CD4-positive, alpha-beta memory T cell (primary cell): ENCODE measurements at regions of chr4 and their contacts with region 1.

Region 1: GRCh38 chr4:145097821-145098674 is at the starts of genes ABCE1 and ANAPC10:
- DNase-seq: peak; percentile 92 to 98 (median 95)
- H3K4me3 ChIP-seq: peak within 1 kb of the TSS; percentile 82 to 96
- H3K4me3 Mint-ChIP-seq: peak within 1 kb of the TSS; percentile 91 to 98 (median 97)
- H3K27ac ChIP-seq: peak within 1 kb of the TSS; percentile 83
- H3K27ac Mint-ChIP-seq: peak within 1 kb of the TSS; percentile 97 to 99 (median 99)
- H3K4me1 ChIP-seq: peaks cover 52% of the 10 kb centered on the region
- H3K4me1 Mint-ChIP-seq: peaks cover 20 to 47% (median 35%) of the 10 kb centered on the region in 4 donors
- H3K27me3 ChIP-seq: no peaks in the 10 kb centered on the region
- H3K27me3 Mint-ChIP-seq: no peaks in the 10 kb centered on the region
- total RNA-seq, gene ABCE1: 67.9 to 71.4 TPM
- total RNA-seq, gene ANAPC10: 14.8 to 15.7 TPM

Region 2: DNA sequence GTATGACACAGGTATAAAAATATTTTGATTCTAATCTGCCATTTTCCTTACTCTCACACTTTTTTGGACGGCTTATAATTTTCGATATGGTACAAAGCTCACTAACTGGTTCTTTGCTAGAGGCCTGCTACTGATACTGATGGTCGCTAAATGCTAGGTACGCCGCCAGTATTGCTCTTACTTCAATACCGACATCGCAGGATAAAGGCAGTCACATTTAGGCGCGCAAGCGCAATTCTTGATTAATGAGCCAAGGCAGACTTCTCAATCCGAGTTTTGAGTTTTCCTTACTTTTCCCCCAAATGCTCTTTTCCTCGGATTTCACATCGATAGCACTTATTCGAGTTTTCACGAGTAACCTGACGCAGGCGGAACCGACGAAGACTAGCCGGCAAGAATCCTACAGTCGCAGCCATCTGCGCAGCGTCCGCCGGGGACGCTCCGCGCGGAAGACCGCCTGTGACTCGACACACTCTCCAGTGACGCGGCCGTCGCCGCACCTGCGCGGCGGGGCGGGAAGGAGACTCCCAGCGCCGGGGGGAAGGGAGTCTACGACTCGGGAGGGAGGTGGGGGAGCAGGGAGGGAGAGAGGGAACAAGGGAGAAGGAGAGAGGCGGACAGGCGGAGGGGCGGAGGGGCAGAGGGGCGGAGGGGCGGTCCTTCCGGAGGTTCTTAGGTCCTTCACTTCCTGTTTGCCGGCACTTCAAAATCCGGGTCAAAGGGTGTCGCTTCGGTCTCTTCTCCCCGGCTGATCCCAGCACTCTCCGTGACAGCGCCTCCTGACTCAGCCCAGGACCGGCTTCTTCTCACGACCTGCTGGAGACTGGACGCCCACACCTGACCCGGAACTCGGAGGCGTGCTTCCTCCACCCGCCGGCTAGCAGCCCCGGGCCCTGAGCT is 1913.6 kb before region 1 on chr4 and contains the start of gene USP38:
- CTCF ChIA-PET with region 1: no interaction called
- POLR2A ChIA-PET with region 1: no interaction called
- intact Hi-C with region 1: loop called (anchors 2 kb)
- DNase-seq: peak; percentile 83 to 94 (median 86)
- H3K4me3 ChIP-seq: peak within 1 kb of the TSS; percentile 59 to 79
- H3K4me3 Mint-ChIP-seq: peak within 1 kb of the TSS; percentile 87 to 96 (median 94)
- H3K27ac ChIP-seq: peak within 1 kb of the TSS; percentile 93
- H3K27ac Mint-ChIP-seq: peak within 1 kb of the TSS; percentile 95 to 99 (median 98)
- H3K4me1 ChIP-seq: peaks cover 49% of the 10 kb centered on the region
- H3K4me1 Mint-ChIP-seq: peaks cover 35 to 63% (median 49%) of the 10 kb centered on the region in 4 donors
- H3K27me3 ChIP-seq: no peaks in the 10 kb centered on the region
- H3K27me3 Mint-ChIP-seq: no peaks in the 10 kb centered on the region
- total RNA-seq, gene USP38: 25.8 to 26.4 TPM

Region 3: DNA sequence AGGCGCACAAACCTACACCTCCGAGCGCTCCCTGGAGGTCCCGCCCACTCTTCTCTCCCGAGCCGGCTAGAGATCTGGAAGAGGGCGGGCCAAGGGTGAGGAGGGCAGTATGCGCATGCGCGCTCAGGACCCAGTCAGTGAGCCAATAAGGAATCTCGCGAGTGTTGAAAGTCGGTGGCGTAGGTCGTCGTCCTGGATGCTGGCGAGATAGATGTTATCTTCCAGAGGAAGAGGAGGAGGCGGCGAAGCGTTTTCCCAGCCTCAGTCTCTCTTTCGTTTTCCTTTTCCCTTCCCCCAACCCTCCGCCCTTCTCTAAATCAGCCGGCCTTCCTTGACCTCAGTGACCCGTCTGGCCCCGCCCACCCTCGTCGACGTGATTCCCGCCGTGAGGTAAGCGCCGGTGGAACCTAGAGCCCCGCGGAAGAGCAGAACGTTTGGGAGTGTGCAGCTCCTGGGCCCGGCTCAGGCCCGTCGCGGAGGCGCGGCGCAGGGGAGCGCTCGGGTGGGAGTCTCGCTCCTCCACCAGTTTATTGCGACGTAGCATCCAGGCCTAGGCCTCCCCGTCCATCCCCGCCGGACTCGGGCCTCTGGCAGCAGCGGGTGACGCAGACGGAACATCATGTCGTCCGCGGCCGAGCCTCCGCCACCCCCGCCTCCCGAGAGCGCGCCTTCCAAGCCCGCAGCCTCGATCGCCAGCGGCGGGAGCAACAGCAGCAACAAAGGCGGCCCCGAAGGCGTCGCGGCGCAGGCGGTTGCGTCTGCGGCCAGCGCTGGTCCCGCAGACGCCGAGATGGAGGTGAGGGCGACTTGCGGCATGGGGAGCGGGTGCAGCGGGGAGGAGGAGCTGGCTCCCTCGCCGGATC is 1584.5 kb before region 1 on chr4 and contains the start of gene SMARCA5:
- CTCF ChIA-PET with region 1: no interaction called
- POLR2A ChIA-PET with region 1: interaction called, 3 read pairs
- intact Hi-C with region 1: loop called (anchors 1 kb)
- DNase-seq: peak; percentile 97 to 99 (median 98)
- H3K4me3 ChIP-seq: peak within 1 kb of the TSS; percentile 75 to 80
- H3K4me3 Mint-ChIP-seq: peak within 1 kb of the TSS; percentile 97 to 100 (median 99)
- H3K27ac ChIP-seq: peak within 1 kb of the TSS; percentile 96
- H3K27ac Mint-ChIP-seq: peak within 1 kb of the TSS; percentile 100
- H3K4me1 ChIP-seq: peaks cover 45% of the 10 kb centered on the region
- H3K4me1 Mint-ChIP-seq: peaks cover 24 to 55% (median 31%) of the 10 kb centered on the region in 4 donors
- H3K27me3 ChIP-seq: peaks cover 4% of the 10 kb centered on the region
- H3K27me3 Mint-ChIP-seq: peaks cover 2 to 5% of the 10 kb centered on the region in 2 donors
- total RNA-seq, gene SMARCA5: 59.3 to 61.2 TPM

Region 4: GRCh38 chr4:145125396-145125795 is 27.3 kb after region 1 on chr4:
- CTCF ChIA-PET with region 1: interaction called, 5 read pairs
- POLR2A ChIA-PET with region 1: interaction called, 15 read pairs
- intact Hi-C with region 1: no loop called
- DNase-seq: no peak
- H3K4me3 ChIP-seq: no peak overlapping the region
- H3K4me3 Mint-ChIP-seq: peak overlapping the region in 3 of 8 donors; percentile 35 to 82 (median 68)
- H3K27ac ChIP-seq: peak overlapping the region; percentile 53
- H3K27ac Mint-ChIP-seq: peak overlapping the region; percentile 81 to 94 (median 89)
- H3K4me1 ChIP-seq: peaks cover 15% of the 10 kb centered on the region
- H3K4me1 Mint-ChIP-seq: peaks cover 13 to 19% (median 15%) of the 10 kb centered on the region in 4 donors
- H3K27me3 ChIP-seq: no peaks in the 10 kb centered on the region
- H3K27me3 Mint-ChIP-seq: no peaks in the 10 kb centered on the region

Region 5: DNA sequence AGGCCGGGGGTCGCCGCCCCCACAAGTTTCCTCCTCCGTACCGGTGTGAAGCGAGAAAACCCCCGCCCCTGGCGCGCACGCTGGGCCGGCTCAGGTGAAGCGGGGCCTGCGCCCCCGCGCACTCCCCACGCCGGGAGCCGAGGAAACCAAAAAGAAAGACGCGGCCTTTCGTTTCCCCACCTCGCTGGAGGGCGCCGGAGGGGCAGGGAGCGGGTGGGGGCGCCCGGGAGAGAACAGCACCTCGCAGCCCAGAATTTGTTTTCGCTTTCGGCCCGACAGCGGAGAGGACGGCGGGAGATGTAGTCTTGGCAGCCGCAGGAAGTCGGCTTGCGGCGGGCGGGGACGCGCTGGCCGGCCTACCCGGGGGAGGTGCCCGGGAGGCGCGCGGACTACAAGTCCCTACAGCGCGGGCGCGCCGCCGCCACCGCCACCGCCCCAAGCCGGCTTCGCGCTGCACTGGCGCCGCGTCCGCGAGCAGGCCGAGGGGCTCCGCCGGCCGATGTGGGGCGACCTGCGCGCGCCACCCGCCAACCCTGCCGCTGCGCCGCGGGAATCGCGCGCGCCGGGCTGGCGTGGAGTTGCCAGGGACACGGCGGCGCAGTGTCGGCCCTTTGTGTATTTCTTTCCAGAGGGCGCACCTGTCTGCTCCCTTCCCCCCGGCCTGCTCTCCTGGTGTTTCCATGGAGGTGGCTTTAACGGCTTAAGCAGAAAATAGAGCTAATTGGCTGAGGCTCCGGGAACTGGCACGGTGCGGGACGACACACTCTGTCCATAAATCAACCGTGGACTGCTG is 82.4 kb after region 1 on chr4 and contains the start of gene OTUD4:
- CTCF ChIA-PET with region 1: interaction called, 10 read pairs
- POLR2A ChIA-PET with region 1: interaction called, 51 read pairs
- intact Hi-C with region 1: loop called (anchors 1 kb)
- DNase-seq: peak; percentile 95 to 97 (median 96)
- H3K4me3 ChIP-seq: peak within 1 kb of the TSS; percentile 84 to 96
- H3K4me3 Mint-ChIP-seq: peak within 1 kb of the TSS; percentile 89 to 98 (median 95)
- H3K27ac ChIP-seq: peak within 1 kb of the TSS; percentile 94
- H3K27ac Mint-ChIP-seq: peak within 1 kb of the TSS; percentile 96 to 99 (median 98)
- H3K4me1 ChIP-seq: peaks cover 40% of the 10 kb centered on the region
- H3K4me1 Mint-ChIP-seq: peaks cover 15 to 40% (median 28%) of the 10 kb centered on the region in 4 donors
- H3K27me3 ChIP-seq: no peaks in the 10 kb centered on the region
- H3K27me3 Mint-ChIP-seq: no peaks in the 10 kb centered on the region
- total RNA-seq, gene OTUD4: 60.1 to 61.3 TPM

Region 6: DNA sequence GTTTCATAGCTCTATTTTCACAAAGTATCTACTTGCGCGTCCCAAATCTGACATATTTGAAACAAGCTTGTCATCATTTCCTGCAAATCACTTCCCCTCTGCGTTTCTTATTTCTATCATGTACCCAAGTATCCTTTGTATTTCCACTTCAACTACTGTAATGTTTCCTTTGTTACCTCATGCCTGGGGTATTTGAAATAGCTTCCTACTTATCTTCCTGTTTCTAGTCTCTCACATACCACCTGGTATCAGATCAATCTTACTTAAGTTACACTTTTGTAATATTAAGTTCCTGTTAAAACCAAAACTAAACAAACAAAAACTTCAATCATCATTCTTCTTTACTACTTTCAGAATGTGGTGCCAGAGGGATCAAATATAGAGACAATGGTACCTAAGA is 290.0 kb after region 1 on chr4:
- CTCF ChIA-PET with region 1: no interaction called
- POLR2A ChIA-PET with region 1: no interaction called
- intact Hi-C with region 1: no loop called
- DNase-seq: no peak
- H3K4me3 ChIP-seq: no peak overlapping the region
- H3K4me3 Mint-ChIP-seq: no peak overlapping the region
- H3K27ac ChIP-seq: no peak overlapping the region
- H3K27ac Mint-ChIP-seq: no peak overlapping the region
- H3K4me1 ChIP-seq: no peaks in the 10 kb centered on the region
- H3K4me1 Mint-ChIP-seq: no peaks in the 10 kb centered on the region
- H3K27me3 ChIP-seq: no peaks in the 10 kb centered on the region
- H3K27me3 Mint-ChIP-seq: peaks cover 7 to 12% of the 10 kb centered on the region in 2 donors

Region 7: DNA sequence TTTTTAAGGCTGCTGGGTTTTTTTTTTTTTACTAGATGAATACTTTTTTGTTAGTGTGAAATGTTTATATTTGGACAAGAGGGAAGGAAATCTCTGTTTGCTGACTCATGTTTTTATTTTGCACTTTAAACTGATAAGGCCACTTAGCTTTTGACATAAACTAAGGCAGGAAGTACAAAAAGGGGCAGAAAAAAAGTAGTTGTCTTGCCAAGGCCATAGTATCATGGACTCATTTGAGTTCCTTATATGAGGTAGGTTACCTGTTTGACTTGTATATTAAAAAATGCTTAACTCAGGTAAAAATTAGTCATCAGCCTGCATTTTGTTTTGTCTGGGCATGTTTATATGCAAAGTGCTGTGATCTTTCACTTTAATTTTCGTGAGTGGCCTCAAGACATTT is 409.6 kb after region 1 on chr4:
- CTCF ChIA-PET with region 1: no interaction called
- POLR2A ChIA-PET with region 1: no interaction called
- intact Hi-C with region 1: no loop called
- DNase-seq: no peak
- H3K4me3 ChIP-seq: no peak overlapping the region
- H3K4me3 Mint-ChIP-seq: no peak overlapping the region
- H3K27ac ChIP-seq: no peak overlapping the region
- H3K27ac Mint-ChIP-seq: no peak overlapping the region
- H3K4me1 ChIP-seq: no peaks in the 10 kb centered on the region
- H3K4me1 Mint-ChIP-seq: no peaks in the 10 kb centered on the region
- H3K27me3 ChIP-seq: no peaks in the 10 kb centered on the region
- H3K27me3 Mint-ChIP-seq: no peaks in the 10 kb centered on the region

Region 8: GRCh38 chr4:146175541-146176453 is 1077.7 kb after region 1 on chr4 and contains the start of gene LSM6:
- CTCF ChIA-PET with region 1: no interaction called
- POLR2A ChIA-PET with region 1: no interaction called
- intact Hi-C with region 1: loop called (anchors 10 kb)
- DNase-seq: peak; percentile 83 to 87 (median 84)
- H3K4me3 ChIP-seq: peak within 1 kb of the TSS; percentile 39 to 96
- H3K4me3 Mint-ChIP-seq: peak within 1 kb of the TSS; percentile 86 to 96 (median 92)
- H3K27ac ChIP-seq: peak within 1 kb of the TSS; percentile 81
- H3K27ac Mint-ChIP-seq: peak within 1 kb of the TSS; percentile 93 to 98 (median 97)
- H3K4me1 ChIP-seq: peaks cover 53% of the 10 kb centered on the region
- H3K4me1 Mint-ChIP-seq: peaks cover 34 to 63% (median 42%) of the 10 kb centered on the region in 4 donors
- H3K27me3 ChIP-seq: no peaks in the 10 kb centered on the region
- H3K27me3 Mint-ChIP-seq: no peaks in the 10 kb centered on the region
- total RNA-seq, gene LSM6: 47.7 to 54.0 TPM